GM12878 (cell line): ENCODE measurements at regions of chrX and their contacts with region 1.

Region 1: GRCh38 chrX:54182864-54183608 is at the start of gene FAM120C:
- DNase-seq: peak; percentile 40
- ATAC-seq: peak; percentile 72
- H3K4me3 ChIP-seq: peak within 1 kb of the TSS; percentile 60
- H3K27ac ChIP-seq: peak within 1 kb of the TSS; percentile 78
- H3K4me1 ChIP-seq: no peaks in the 10 kb centered on the region
- H3K27me3 ChIP-seq: no peaks in the 10 kb centered on the region
- CTCF ChIP-seq: no peak
- EP300 ChIP-seq: no peak
- POLR2A ChIP-seq: peak; percentile 75
- RAD21 ChIP-seq: no peak
- polyA plus RNA-seq, gene FAM120C: 1.3 to 1.4 TPM

Region 2: GRCh38 chrX:54044126-54044876 is 138.7 kb before region 1 on chrX and contains the start of gene PHF8:
- CTCF ChIA-PET with region 1: interaction called, 5 read pairs
- POLR2A ChIA-PET with region 1: interaction called, 6 read pairs
- RAD21 ChIA-PET with region 1: interaction called, 4 read pairs
- SMC1A ChIA-PET with region 1: interaction called, 3 read pairs
- in situ Hi-C with region 1: no loop called
- intact Hi-C with region 1: loop called (anchors 2 kb)
- DNase-seq: peak; percentile 77
- ATAC-seq: peak; percentile 91
- H3K4me3 ChIP-seq: peak within 1 kb of the TSS; percentile 80
- H3K27ac ChIP-seq: peak within 1 kb of the TSS; percentile 83
- H3K4me1 ChIP-seq: peaks cover 4% of the 10 kb centered on the region; the same call in 1 of the 2 replicates
- H3K27me3 ChIP-seq: no peaks in the 10 kb centered on the region
- CTCF ChIP-seq: no peak
- EP300 ChIP-seq: no peak
- POLR2A ChIP-seq: peak; percentile 58
- RAD21 ChIP-seq: no peak
- polyA plus RNA-seq, gene PHF8: 2.4 TPM

Region 3: GRCh38 chrX:54213603-54214002 is 30.6 kb after region 1 on chrX:
- CTCF ChIA-PET with region 1: no interaction called
- POLR2A ChIA-PET with region 1: no interaction called
- RAD21 ChIA-PET with region 1: no interaction called
- SMC1A ChIA-PET with region 1: no interaction called
- in situ Hi-C with region 1: no loop called
- intact Hi-C with region 1: no loop called
- DNase-seq: no peak
- ATAC-seq: no peak
- H3K4me3 ChIP-seq: no peak overlapping the region
- H3K27ac ChIP-seq: no peak overlapping the region
- H3K4me1 ChIP-seq: no peaks in the 10 kb centered on the region
- H3K27me3 ChIP-seq: no peaks in the 10 kb centered on the region
- CTCF ChIP-seq: no peak
- EP300 ChIP-seq: no peak
- POLR2A ChIP-seq: no peak
- RAD21 ChIP-seq: no peak